ENCODE measurements at regions of chr18 and their contacts with region 1.

Region 1: GRCh38 chr18:3447895-3448837 is 1.8 kb upstream of the TGIF1 start:
- DNase-seq: peak; percentile 94
- ATAC-seq: peak; percentile 69
- H3K4me3 Mint-ChIP-seq: peak overlapping the region; percentile 94
- H3K27ac Mint-ChIP-seq: peak overlapping the region; percentile 97
- H3K4me1 Mint-ChIP-seq: peaks cover 26% of the 10 kb centered on the region
- H3K27me3 Mint-ChIP-seq: no peaks in the 10 kb centered on the region

Region 2: GRCh38 chr18:2641638-2642037 is 806.5 kb before region 1 on chr18:
- CTCF ChIA-PET with region 1: no interaction called
- POLR2A ChIA-PET with region 1: no interaction called
- intact Hi-C with region 1: loop called in 1 of 2 experiments (anchors 5 kb)
- DNase-seq: no peak
- ATAC-seq: peak; percentile 71
- H3K4me3 Mint-ChIP-seq: peak overlapping the region; percentile 63
- H3K27ac Mint-ChIP-seq: no peak overlapping the region
- H3K4me1 Mint-ChIP-seq: peaks cover 51% of the 10 kb centered on the region
- H3K27me3 Mint-ChIP-seq: no peaks in the 10 kb centered on the region

Region 3: GRCh38 chr18:3245853-3246634 is 202.1 kb before region 1 on chr18:
- CTCF ChIA-PET with region 1: interaction called, 8 read pairs
- POLR2A ChIA-PET with region 1: interaction called, 8 read pairs
- intact Hi-C with region 1: loop called (anchors 1 to 5 kb)
- DNase-seq: peak; percentile 92
- ATAC-seq: peak; percentile 55
- H3K4me3 Mint-ChIP-seq: peak overlapping the region; percentile 76
- H3K27ac Mint-ChIP-seq: peak overlapping the region; percentile 97
- H3K4me1 Mint-ChIP-seq: peaks cover 26% of the 10 kb centered on the region
- H3K27me3 Mint-ChIP-seq: no peaks in the 10 kb centered on the region

Region 4: DNA sequence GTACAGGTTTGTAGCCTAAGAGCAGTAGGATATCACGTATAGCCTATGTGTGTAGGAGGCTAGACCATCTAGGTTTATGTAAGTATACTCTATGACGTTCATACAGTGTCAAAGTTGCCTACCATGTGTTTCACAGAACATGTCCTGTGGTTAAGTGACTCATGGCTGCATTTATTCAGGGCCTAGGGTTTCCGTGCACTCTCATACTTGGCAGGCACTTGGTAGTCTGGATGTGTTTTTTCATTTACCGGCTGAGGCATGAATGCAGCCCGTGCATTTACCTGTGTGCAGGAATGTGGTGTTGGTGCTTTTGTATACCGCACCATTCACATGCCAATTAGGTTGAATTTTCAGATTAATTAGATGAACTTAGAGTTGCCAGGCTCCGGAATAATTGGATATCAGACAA is 142.8 kb before region 1 on chr18:
- CTCF ChIA-PET with region 1: no interaction called
- POLR2A ChIA-PET with region 1: interaction called, 6 read pairs
- intact Hi-C with region 1: loop called in 1 of 2 experiments (anchors 1 kb)
- DNase-seq: peak; percentile 72
- ATAC-seq: peak; percentile 98
- H3K4me3 Mint-ChIP-seq: peak overlapping the region; percentile 20
- H3K27ac Mint-ChIP-seq: peak overlapping the region; percentile 89
- H3K4me1 Mint-ChIP-seq: peaks cover 20% of the 10 kb centered on the region
- H3K27me3 Mint-ChIP-seq: peaks cover 16% of the 10 kb centered on the region

Region 5: DNA sequence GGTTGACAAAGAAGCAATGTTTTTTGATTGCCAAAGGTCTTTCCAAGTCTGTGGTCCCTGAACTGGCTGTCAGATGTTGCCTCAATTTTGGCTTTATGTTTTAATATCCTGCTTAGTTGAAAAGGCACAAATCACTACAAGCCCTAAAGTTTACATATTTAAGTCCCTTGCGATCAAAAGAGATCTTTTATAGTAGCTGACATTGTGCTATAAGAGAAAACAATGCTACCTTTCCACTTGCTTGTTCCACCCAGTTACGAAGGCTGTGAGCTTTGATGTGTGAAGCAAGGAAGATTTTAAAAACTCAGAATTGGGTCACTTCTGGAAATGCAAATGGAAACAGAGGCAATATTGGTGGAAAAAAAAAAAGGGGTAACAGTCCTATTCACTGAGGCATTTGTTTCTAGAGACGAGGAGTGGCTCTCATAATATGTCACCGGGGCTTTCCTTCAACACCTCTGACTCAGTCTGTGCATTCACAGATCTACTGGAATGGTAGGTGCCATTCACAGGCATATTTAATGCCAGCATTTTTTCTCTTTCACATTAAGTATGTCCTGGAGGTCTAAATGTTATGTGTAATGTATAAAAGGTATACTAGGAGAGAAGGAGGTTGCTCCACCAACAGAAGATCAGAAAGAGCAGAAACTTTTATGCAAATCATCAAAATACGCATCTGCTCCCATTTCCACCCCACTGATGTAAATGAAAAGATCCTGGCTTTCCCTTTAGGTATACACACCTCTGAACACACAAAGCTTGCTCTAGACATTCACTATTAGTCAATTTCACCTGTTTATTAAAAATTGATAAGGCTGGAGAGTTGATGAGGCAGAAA is 93.6 kb after region 1 on chr18:
- CTCF ChIA-PET with region 1: no interaction called
- POLR2A ChIA-PET with region 1: no interaction called
- intact Hi-C with region 1: loop called (anchors 1 to 5 kb)
- DNase-seq: peak; percentile 65
- ATAC-seq: peak; percentile 96
- H3K4me3 Mint-ChIP-seq: peak overlapping the region; percentile 16
- H3K27ac Mint-ChIP-seq: peak overlapping the region; percentile 74
- H3K4me1 Mint-ChIP-seq: peaks cover 32% of the 10 kb centered on the region
- H3K27me3 Mint-ChIP-seq: peaks cover 2% of the 10 kb centered on the region

Region 6: DNA sequence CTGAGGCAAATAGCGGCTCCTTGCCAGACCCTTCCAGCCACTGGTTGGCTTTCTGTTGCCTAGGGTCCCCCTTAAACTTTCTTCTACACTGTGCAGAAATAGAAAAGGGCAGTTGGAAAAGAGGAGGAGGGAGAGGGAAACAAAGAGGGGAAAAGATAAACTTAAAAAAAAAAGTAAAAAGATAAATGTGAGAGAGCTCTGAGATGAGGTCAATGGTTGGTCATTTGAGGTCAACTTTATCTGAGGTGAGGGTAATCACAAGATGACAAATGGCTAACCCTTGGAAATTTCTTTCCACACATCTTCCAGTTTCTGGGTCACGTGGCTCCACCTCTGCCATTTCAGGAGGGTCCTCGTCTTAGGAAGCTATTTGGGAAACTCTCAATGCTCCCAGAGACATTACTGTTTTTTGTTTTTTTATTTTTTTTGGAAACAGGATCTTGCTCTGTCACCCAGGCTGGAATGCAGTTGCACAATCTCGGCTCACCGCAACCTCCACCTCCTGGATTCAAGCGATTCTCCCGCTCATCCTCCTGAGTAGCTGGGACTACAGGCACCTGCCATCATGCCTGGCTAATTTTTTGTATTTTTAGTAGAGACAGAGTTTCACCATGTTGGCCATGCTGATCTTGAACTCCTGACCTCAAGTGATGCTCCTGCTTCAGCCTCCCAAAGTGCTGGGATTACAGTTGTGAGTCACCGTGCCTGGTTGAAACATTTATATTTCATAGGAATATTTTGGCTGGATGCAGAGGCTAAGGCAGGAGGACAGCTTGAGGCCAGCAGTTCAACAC is 201.7 kb after region 1 on chr18:
- CTCF ChIA-PET with region 1: no interaction called
- POLR2A ChIA-PET with region 1: no interaction called
- intact Hi-C with region 1: no loop called
- DNase-seq: no peak
- ATAC-seq: no peak
- H3K4me3 Mint-ChIP-seq: no peak overlapping the region
- H3K27ac Mint-ChIP-seq: no peak overlapping the region
- H3K4me1 Mint-ChIP-seq: peaks cover 40% of the 10 kb centered on the region
- H3K27me3 Mint-ChIP-seq: no peaks in the 10 kb centered on the region

Region 7: DNA sequence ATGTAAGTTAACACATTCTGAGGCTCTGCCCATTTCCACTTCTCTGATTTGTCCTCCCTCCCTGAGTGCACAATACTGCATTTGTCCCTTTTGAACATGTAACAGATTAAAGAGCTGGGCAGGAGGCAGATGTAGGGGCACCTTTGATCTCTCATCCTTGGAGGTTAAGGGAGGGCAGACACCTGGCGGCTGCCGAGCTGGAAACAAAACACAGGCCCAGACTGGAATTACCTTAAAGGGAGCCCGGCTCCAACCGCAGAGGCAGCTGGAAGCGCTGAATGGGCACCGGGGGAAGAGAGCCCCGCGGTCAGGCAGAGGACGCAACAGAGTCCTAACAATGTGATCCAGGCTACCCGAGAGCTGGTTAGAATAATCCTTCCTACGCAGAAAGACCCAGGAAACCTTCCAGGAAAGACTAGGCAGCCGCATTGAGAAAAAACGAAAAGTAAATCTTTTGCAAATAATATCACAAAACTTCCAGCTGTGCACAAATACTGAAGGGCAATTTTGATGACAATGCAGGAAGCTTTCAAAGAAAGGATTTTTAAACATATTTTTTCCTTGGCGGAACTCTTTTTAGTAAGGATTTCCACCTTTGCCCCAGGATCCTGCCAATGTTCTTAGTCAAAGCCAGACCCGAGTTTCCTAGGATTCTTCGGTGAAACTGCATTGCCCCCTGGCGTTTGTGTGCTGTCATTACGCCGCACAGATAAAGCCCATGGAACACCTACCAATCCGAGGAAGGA is 217.8 kb after region 1 on chr18:
- CTCF ChIA-PET with region 1: interaction called, 34 read pairs
- POLR2A ChIA-PET with region 1: no interaction called
- intact Hi-C with region 1: no loop called
- DNase-seq: peak; percentile 81
- ATAC-seq: peak; percentile 64
- H3K4me3 Mint-ChIP-seq: peak overlapping the region; percentile 28
- H3K27ac Mint-ChIP-seq: peak overlapping the region; percentile 17
- H3K4me1 Mint-ChIP-seq: peaks cover 36% of the 10 kb centered on the region
- H3K27me3 Mint-ChIP-seq: no peaks in the 10 kb centered on the region